ENCODE measurements at regions of chr12 and their contacts with region 1.

Region 1: GRCh38 chr12:110575326-110575725 is 7.8 kb downstream of the PPTC7 start:
- DNase-seq: no peak
- H3K4me3 ChIP-seq: no peak overlapping the region
- H3K27ac ChIP-seq: no peak overlapping the region
- H3K4me1 ChIP-seq: peaks cover 28% of the 10 kb centered on the region
- CTCF ChIP-seq: no peak

Region 2: GRCh38 chr12:110199339-110200123 is 375.8 kb before region 1 on chr12:
- CTCF ChIA-PET with region 1: no interaction called
- POLR2A ChIA-PET with region 1: interaction called, 11 read pairs
- intact Hi-C with region 1: no loop called
- DNase-seq: peak; percentile 30
- H3K4me3 ChIP-seq: peak overlapping the region; percentile 2
- H3K27ac ChIP-seq: no peak overlapping the region
- H3K4me1 ChIP-seq: peaks cover 21% of the 10 kb centered on the region
- CTCF ChIP-seq: no peak